Calu3 (cell line): ENCODE measurements at regions of chr16 and their contacts with region 1.

Region 1: GRCh38 chr16:53346-54236 is at the starts of genes POLR3K and SNRNP25:
- DNase-seq: peak; percentile 99
- H3K4me3 Mint-ChIP-seq: peak within 1 kb of the TSS; percentile 100
- H3K27ac Mint-ChIP-seq: peak within 1 kb of the TSS; percentile 90
- H3K4me1 Mint-ChIP-seq: no peaks in the 10 kb centered on the region
- H3K27me3 Mint-ChIP-seq: no peaks in the 10 kb centered on the region
- CTCF ChIP-seq: no peak
- total RNA-seq, gene POLR3K: 27.4 and 29.1 TPM in 2 replicates
- total RNA-seq, gene SNRNP25: 37.8 and 38.7 TPM in 2 replicates

Region 2: DNA sequence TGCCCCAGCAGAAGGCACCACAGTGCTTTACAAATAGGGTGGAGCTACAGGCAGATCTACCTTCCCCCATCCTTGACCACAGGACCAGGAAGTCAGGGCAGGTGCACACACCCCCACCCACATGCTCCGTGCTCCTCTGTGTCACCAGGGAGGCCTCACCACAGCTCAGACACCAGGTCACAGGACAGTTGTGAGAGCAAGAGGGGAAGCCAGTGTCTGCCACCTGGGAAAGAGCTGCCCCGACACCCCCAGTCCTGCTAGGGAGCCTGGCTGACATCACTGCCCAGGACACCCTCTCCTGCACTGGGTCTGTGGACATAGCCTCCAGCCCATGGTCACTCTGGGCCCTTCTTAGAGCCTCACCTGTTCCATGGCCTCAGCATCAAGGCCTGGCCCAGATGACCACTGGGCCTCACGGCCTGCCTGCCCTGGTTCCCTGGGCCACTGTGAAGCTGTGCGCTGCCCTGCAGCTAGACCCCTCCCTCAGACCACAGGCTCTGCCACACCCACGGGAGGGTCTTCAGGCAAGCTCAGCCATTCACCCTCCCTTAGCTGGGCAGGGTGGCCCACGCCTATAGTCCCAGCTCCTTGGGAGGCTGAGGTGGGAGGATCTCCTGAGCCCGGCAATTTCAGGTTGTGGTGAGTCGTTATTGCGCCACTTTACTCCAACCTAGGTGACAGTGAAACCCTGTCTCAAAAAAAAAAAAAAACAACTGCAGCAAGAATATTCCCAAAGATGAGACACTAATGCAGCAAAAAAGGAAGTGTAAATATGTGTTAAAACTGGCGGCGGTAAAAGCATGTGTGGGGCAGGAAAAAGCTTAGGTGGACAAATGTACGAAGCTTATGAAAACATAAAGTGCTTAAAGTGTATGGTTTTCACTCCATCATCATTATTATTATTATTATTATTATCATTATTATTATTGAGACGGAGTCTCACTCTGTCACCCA is 14.4 kb before region 1 on chr16:
- CTCF ChIA-PET with region 1: interaction called, 12 read pairs
- intact Hi-C with region 1: no loop called
- DNase-seq: peak; percentile 86
- H3K4me3 Mint-ChIP-seq: no peak overlapping the region
- H3K27ac Mint-ChIP-seq: no peak overlapping the region
- H3K4me1 Mint-ChIP-seq: peaks cover 34% of the 10 kb centered on the region
- H3K27me3 Mint-ChIP-seq: no peaks in the 10 kb centered on the region
- CTCF ChIP-seq: no peak